Upper lobe of right lung (tissue), 1 donor: ENCODE measurements at regions of chr10 and their contacts with region 1.

Region 1: DNA sequence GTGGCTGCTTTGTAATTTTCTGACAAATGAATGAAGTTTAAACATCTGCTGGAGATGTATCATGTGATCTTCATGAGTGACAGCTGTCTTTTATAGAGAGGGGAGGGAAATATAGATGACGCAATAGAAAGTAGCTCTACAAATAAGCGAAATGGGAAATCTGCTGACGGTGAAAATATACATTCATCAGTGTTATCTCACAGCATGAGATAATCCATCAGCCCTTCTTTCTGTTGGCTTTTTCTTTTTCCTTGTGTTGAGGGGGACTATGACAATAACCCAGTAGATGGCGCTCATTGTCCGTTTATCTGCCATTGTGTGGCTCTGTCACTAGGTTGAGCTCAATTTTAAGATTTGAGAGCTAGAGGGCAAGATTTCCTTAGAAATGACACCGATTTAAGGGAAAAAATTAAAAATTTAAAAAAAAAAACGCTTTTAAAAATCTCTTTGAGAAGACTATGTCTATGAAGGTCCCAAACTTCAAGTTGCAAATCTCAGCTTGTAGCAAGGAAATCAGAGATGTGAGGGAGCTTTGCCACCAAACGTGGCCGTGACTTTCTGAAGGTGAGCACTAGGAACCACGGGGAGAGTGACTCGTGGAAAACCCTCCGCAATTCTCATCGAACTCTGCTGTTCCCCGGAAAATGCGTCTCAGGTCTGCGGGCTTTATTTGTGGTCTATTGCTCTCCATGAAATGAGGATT is 114.6 kb upstream of the SFMBT2 start:
- DNase-seq: no peak
- ATAC-seq: peak; percentile 90
- H3K4me3 ChIP-seq: no peak overlapping the region
- H3K27ac ChIP-seq: no peak overlapping the region
- H3K4me1 ChIP-seq: no peaks in the 10 kb centered on the region
- H3K27me3 ChIP-seq: peaks cover 9% of the 10 kb centered on the region
- CTCF ChIP-seq: peak; percentile 81

Region 2: GRCh38 chr10:7484456-7485243 is 40.8 kb before region 1 on chr10:
- intact Hi-C with region 1: no loop called
- DNase-seq: no peak
- ATAC-seq: peak; percentile 57
- H3K4me3 ChIP-seq: no peak overlapping the region
- H3K27ac ChIP-seq: peak overlapping the region; percentile 33
- H3K4me1 ChIP-seq: peaks cover 22% of the 10 kb centered on the region
- H3K27me3 ChIP-seq: no peaks in the 10 kb centered on the region
- CTCF ChIP-seq: no peak

Region 3: GRCh38 chr10:7687228-7687907 is 161.9 kb after region 1 on chr10:
- intact Hi-C with region 1: loop called (anchors 5 kb)
- DNase-seq: peak; percentile 84
- ATAC-seq: peak; percentile 98
- H3K4me3 ChIP-seq: no peak overlapping the region
- H3K27ac ChIP-seq: no peak overlapping the region
- H3K4me1 ChIP-seq: no peaks in the 10 kb centered on the region
- H3K27me3 ChIP-seq: peaks cover 3% of the 10 kb centered on the region
- CTCF ChIP-seq: peak; percentile 87